Vagina (tissue), 2 donors: ENCODE measurements at regions of chr7 and their contacts with region 1.

Region 1: DNA sequence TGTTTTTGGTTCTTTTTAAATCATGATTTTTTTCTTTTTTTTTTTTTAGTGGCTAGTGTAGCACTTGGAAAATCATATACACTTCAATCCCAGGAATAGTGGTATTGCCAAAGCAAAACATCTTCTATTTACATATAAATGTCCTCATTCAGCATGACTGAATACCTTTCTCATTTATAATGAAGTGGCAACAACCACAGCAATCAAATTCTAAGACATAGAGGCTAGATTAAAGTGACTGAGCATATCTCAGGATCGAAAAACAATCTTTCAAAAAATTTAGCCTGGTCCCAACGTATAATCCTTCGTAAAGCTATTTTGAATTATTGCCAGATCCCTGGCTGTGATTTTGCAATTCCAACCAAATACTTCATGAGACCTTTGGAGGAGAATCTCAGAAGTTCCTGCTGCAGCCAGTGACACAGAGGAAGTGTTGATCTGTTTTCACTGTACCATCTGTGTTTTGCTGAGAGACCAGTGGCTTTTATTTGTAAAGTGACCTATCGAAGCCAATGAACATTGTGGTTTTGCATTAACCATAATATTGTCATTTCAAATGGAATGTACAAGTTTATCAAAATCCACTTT is 29.8 kb upstream of the SP8 start:
- DNase-seq: no peak
- H3K4me3 ChIP-seq: no peak overlapping the region
- H3K27ac ChIP-seq: no peak overlapping the region
- H3K4me1 ChIP-seq: no peaks in the 10 kb centered on the region
- H3K27me3 ChIP-seq: no peaks in the 10 kb centered on the region
- CTCF ChIP-seq: no peak
- POLR2A ChIP-seq: no peak

Region 2: DNA sequence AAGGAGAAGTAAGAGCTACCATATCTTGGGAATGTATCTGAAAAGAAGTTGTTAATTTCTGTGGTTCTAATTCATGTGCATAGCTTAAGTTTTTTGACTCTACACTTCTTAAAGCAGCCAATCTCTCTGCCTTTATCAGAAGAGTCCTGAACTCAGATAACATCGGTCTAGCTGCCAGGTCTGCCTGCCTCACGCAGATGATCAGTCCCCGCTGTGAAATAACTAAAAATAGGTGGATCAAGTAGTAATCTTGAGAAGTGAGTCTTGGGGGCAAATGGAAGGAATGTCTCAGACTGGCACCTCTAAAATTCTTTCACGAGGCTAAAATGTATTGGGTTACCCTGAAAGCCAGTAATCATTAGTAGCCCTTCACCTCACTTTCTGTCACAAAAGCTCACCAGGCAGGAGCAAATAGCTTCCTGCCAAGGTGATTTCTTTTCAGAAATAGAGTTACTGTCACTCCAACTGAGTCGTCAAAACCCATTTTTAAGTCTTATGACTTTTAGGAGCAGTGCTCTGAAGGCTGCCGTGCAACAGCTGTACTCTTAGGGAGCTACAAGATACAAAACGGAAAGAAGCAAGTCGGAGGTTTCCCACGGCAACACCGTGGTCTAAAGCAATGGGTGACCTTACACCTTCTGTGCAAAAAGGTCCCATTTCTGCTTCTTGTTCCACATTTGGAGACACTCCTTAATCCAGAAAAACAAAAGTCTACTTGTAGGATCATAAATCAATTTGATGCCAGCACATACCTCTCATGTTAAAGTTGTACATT is 115.8 kb before region 1 on chr7:
- intact Hi-C with region 1: no loop called
- DNase-seq: no peak
- H3K4me3 ChIP-seq: no peak overlapping the region
- H3K27ac ChIP-seq: no peak overlapping the region
- H3K4me1 ChIP-seq: no peaks in the 10 kb centered on the region
- H3K27me3 ChIP-seq: no peaks in the 10 kb centered on the region
- CTCF ChIP-seq: no peak
- POLR2A ChIP-seq: no peak

Region 3: DNA sequence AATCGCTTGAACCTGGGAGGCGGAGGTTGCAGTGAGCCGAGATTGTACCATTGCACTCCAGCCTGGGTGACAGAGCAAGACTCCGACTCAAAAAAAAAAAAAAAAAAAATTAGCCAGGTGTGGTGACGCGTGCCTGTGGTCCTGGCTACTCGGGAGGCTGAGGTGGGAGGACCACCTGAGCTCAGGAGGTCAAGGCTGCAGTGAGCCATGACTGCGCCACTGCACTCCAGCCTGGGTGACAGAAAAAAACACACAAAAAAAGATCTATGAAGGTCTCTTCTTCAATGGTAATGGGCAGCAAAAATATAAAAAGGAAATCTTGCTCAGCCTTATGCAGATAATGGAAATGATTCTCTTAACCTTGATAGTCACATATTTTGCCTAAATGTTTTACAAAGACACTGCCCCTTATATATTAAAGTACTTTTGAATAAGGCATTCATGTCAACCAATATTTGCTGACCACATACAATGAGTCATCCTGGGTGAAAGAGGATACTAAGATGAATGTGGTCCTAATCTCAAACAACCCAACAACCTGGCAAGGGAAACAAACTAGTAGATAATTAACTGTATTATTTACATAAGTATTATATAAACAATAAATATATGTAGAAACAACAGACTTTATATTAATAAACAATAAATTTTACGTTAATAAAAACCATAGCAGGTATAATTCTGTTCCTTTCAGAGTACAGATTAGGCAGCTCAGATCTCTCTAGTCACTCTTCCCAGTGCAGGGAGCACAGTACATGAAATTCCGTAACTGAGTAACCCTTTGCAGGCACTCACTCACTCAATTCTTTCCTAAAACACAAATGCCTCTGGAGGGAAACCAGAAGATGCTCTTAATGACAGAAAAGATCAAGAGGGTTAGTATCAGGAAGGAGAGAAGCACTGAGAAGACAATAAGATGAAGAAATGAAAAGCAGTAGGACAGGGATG is 1998.1 kb after region 1 on chr7:
- intact Hi-C with region 1: loop called (anchors 5 kb)
- DNase-seq: no peak
- H3K4me3 ChIP-seq: no peak overlapping the region
- H3K27ac ChIP-seq: no peak overlapping the region
- H3K4me1 ChIP-seq: peaks cover 2% of the 10 kb centered on the region
- H3K27me3 ChIP-seq: no peaks in the 10 kb centered on the region
- CTCF ChIP-seq: no peak
- POLR2A ChIP-seq: no peak